Activated B cell treated with CpG ODN at 0.5 μM for 24 hours (primary cell): ENCODE measurements at regions of chr11 and their contacts with region 1.

Region 1: DNA sequence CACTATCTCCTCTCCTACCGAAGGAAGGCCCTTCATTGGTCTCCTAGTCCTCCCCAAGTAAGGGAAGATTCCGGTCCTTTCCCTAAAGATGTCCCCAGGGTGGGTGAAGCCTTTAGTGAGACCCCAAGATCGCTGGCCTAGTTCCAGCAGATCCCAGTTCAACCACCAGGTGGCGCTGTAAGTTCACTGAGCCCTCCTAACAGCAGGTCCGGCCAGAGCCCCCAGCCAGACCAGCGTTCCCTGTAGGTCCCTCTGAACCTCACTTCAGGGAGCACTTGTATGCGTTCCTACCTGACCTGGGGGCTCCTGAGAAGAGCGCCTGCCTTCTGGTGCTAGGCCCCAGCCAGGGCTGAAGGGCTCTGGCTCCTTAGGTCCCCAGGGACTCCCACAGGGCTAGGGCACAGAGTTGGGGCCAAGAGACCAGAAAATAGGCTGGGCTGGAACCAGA is 38.1 kb downstream of the LMO1 start:
- DNase-seq: peak; percentile 67
- ATAC-seq: peak; percentile 79
- H3K4me3 Mint-ChIP-seq: no peak overlapping the region
- H3K27ac Mint-ChIP-seq: no peak overlapping the region
- H3K4me1 Mint-ChIP-seq: no peaks in the 10 kb centered on the region
- H3K27me3 Mint-ChIP-seq: peaks cover 3% of the 10 kb centered on the region
- CTCF ChIP-seq: no peak

Region 2: GRCh38 chr11:8180469-8180868 is 45.1 kb before region 1 on chr11:
- CTCF ChIA-PET with region 1: no interaction called
- POLR2A ChIA-PET with region 1: no interaction called
- intact Hi-C with region 1: no loop called
- DNase-seq: no peak
- ATAC-seq: no peak
- H3K4me3 Mint-ChIP-seq: no peak overlapping the region
- H3K27ac Mint-ChIP-seq: no peak overlapping the region
- H3K4me1 Mint-ChIP-seq: no peaks in the 10 kb centered on the region
- H3K27me3 Mint-ChIP-seq: peaks cover 29% of the 10 kb centered on the region
- CTCF ChIP-seq: no peak

Region 3: GRCh38 chr11:8192016-8192895 is 33.4 kb before region 1 on chr11:
- CTCF ChIA-PET with region 1: interaction called, 5 read pairs
- POLR2A ChIA-PET with region 1: interaction called, 10 read pairs
- intact Hi-C with region 1: loop called (anchors 1 kb)
- DNase-seq: peak; percentile 37
- ATAC-seq: peak; percentile 85
- H3K4me3 Mint-ChIP-seq: no peak overlapping the region
- H3K27ac Mint-ChIP-seq: no peak overlapping the region
- H3K4me1 Mint-ChIP-seq: peaks cover 8% of the 10 kb centered on the region
- H3K27me3 Mint-ChIP-seq: peaks cover 4% of the 10 kb centered on the region
- CTCF ChIP-seq: peak; percentile 42

Region 4: DNA sequence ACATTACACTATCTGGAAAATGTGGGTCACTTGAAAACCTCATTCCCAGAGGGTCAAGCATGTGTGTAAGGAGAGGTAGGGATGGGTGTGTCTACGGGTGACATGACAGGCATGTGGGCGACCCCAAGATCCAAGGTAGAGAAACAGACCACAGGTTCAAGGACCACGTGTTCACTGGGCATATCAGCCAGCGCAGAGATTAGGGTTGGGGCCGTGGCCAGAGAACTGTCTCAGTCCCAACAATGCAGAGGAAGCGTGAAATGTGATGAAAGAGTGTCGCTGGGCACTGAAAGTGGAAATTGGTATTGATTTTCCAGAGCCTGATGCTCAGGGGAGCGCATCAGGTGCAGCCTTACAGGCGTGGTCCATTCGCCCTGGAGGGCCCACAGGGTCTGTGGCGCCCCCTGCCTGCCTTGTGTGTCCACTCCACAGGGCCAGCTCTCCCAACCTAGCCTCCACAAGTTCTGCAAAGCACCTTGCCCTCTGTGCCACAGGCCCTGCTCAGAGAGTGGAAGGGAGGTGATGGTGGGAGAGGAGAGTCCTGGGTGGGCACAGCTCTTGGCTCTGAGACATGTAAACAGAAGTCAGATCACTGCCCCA is 92.8 kb after region 1 on chr11:
- CTCF ChIA-PET with region 1: no interaction called
- POLR2A ChIA-PET with region 1: no interaction called
- intact Hi-C with region 1: no loop called
- DNase-seq: no peak
- ATAC-seq: no peak
- H3K4me3 Mint-ChIP-seq: no peak overlapping the region
- H3K27ac Mint-ChIP-seq: no peak overlapping the region
- H3K4me1 Mint-ChIP-seq: no peaks in the 10 kb centered on the region
- H3K27me3 Mint-ChIP-seq: peaks cover 17% of the 10 kb centered on the region
- CTCF ChIP-seq: no peak

Region 5: GRCh38 chr11:8354622-8355415 is 129.2 kb after region 1 on chr11:
- CTCF ChIA-PET with region 1: no interaction called
- POLR2A ChIA-PET with region 1: no interaction called
- intact Hi-C with region 1: loop called (anchors 1 kb)
- DNase-seq: no peak
- ATAC-seq: no peak
- H3K4me3 Mint-ChIP-seq: peak overlapping the region; percentile 53
- H3K27ac Mint-ChIP-seq: no peak overlapping the region
- H3K4me1 Mint-ChIP-seq: peaks cover 6% of the 10 kb centered on the region
- H3K27me3 Mint-ChIP-seq: peaks cover 26% of the 10 kb centered on the region
- CTCF ChIP-seq: no peak

Region 6: GRCh38 chr11:8604078-8604723 is 378.6 kb after region 1 on chr11:
- CTCF ChIA-PET with region 1: no interaction called
- POLR2A ChIA-PET with region 1: no interaction called
- intact Hi-C with region 1: loop called (anchors 1 kb)
- DNase-seq: peak; percentile 25
- ATAC-seq: peak; percentile 76
- H3K4me3 Mint-ChIP-seq: no peak overlapping the region
- H3K27ac Mint-ChIP-seq: no peak overlapping the region
- H3K4me1 Mint-ChIP-seq: no peaks in the 10 kb centered on the region
- H3K27me3 Mint-ChIP-seq: peaks cover 24% of the 10 kb centered on the region
- CTCF ChIP-seq: peak; percentile 59

Region 7: DNA sequence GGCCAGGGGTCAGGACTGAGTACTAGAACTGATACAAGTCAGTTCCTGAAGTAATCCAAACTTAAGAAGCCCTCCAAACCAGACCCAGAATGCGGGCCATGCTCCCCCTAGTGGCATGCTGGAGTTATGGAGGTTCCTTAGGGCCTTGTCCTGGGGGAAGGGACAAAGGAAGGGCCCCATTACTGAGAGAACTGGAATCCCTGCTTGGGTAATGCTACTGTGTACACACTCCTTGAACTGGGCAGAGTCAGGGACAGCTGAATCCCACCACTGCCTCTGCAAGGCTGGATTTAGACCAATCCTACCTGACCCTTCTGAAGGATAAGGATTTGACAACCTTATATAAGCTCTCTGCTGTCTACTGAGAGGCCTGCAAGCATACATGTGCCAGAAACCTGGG is 588.0 kb after region 1 on chr11:
- CTCF ChIA-PET with region 1: no interaction called
- POLR2A ChIA-PET with region 1: no interaction called
- intact Hi-C with region 1: loop called (anchors 2 kb)
- DNase-seq: peak; percentile 29
- ATAC-seq: peak; percentile 77
- H3K4me3 Mint-ChIP-seq: no peak overlapping the region
- H3K27ac Mint-ChIP-seq: no peak overlapping the region
- H3K4me1 Mint-ChIP-seq: peaks cover 10% of the 10 kb centered on the region
- H3K27me3 Mint-ChIP-seq: peaks cover 10% of the 10 kb centered on the region
- CTCF ChIP-seq: peak; percentile 23

Region 8: GRCh38 chr11:9137293-9138132 is 911.9 kb after region 1 on chr11:
- CTCF ChIA-PET with region 1: no interaction called
- POLR2A ChIA-PET with region 1: no interaction called
- intact Hi-C with region 1: loop called (anchors 1 kb)
- DNase-seq: peak; percentile 60
- ATAC-seq: peak; percentile 99
- H3K4me3 Mint-ChIP-seq: no peak overlapping the region
- H3K27ac Mint-ChIP-seq: no peak overlapping the region
- H3K4me1 Mint-ChIP-seq: peaks cover 3% of the 10 kb centered on the region
- H3K27me3 Mint-ChIP-seq: no peaks in the 10 kb centered on the region
- CTCF ChIP-seq: peak; percentile 50

Region 9: GRCh38 chr11:9506489-9507276 is 1281.1 kb after region 1 on chr11:
- CTCF ChIA-PET with region 1: no interaction called
- POLR2A ChIA-PET with region 1: no interaction called
- intact Hi-C with region 1: loop called (anchors 10 kb)
- DNase-seq: peak; percentile 42
- ATAC-seq: peak; percentile 80
- H3K4me3 Mint-ChIP-seq: no peak overlapping the region
- H3K27ac Mint-ChIP-seq: no peak overlapping the region
- H3K4me1 Mint-ChIP-seq: peaks cover 16% of the 10 kb centered on the region
- H3K27me3 Mint-ChIP-seq: no peaks in the 10 kb centered on the region
- CTCF ChIP-seq: peak; percentile 71